B cell (primary cell): ENCODE measurements at regions of chr3 and their contacts with region 1.

Region 1: GRCh38 chr3:31981206-31982181 is at the starts of genes OSBPL10 and ZNF860:
- DNase-seq: peak; percentile 75
- ATAC-seq: peak; percentile 64
- H3K4me3 ChIP-seq: peak within 1 kb of the TSS; percentile 75 to 95 (median 88)
- H3K4me3 Mint-ChIP-seq: peak within 1 kb of the TSS; percentile 99
- H3K27ac ChIP-seq: peak within 1 kb of the TSS; percentile 70 to 84
- H3K27ac Mint-ChIP-seq: peak within 1 kb of the TSS; percentile 98
- H3K4me1 ChIP-seq: peaks cover 75% of the 10 kb centered on the region in 2 donors
- H3K4me1 Mint-ChIP-seq: peaks cover 78% of the 10 kb centered on the region
- H3K27me3 ChIP-seq: no peaks in the 10 kb centered on the region
- H3K27me3 Mint-ChIP-seq: no peaks in the 10 kb centered on the region
- CTCF ChIP-seq: no peak
- total RNA-seq, gene OSBPL10: 310 and 317 TPM in 2 replicates
- total RNA-seq, gene ZNF860: 41.4 and 45.9 TPM in 2 replicates

Region 2: GRCh38 chr3:31802981-31803740 is 178.3 kb before region 1 on chr3:
- CTCF ChIA-PET with region 1: interaction called, 3 read pairs
- POLR2A ChIA-PET with region 1: interaction called, 4 read pairs
- intact Hi-C with region 1: loop called (anchors 5 kb)
- DNase-seq: peak; percentile 26
- ATAC-seq: peak; percentile 87
- H3K4me3 ChIP-seq: no peak overlapping the region
- H3K4me3 Mint-ChIP-seq: peak overlapping the region; percentile 19
- H3K27ac ChIP-seq: peak overlapping the region in 1 of 2 donors; percentile 56
- H3K27ac Mint-ChIP-seq: peak overlapping the region; percentile 78
- H3K4me1 ChIP-seq: peaks cover 12 to 13% of the 10 kb centered on the region in 2 donors
- H3K4me1 Mint-ChIP-seq: peaks cover 52% of the 10 kb centered on the region
- H3K27me3 ChIP-seq: no peaks in the 10 kb centered on the region
- H3K27me3 Mint-ChIP-seq: no peaks in the 10 kb centered on the region
- CTCF ChIP-seq: no peak

Region 3: GRCh38 chr3:31934018-31934417 is 47.5 kb before region 1 on chr3:
- CTCF ChIA-PET with region 1: no interaction called
- POLR2A ChIA-PET with region 1: interaction called, 4 read pairs
- intact Hi-C with region 1: loop called (anchors 2 kb)
- DNase-seq: no peak
- ATAC-seq: peak; percentile 28
- H3K4me3 ChIP-seq: no peak overlapping the region
- H3K4me3 Mint-ChIP-seq: peak overlapping the region; percentile 40
- H3K27ac ChIP-seq: peak overlapping the region in 1 of 2 donors; percentile 67
- H3K27ac Mint-ChIP-seq: peak overlapping the region; percentile 77
- H3K4me1 ChIP-seq: peaks cover 60 to 75% of the 10 kb centered on the region in 2 donors
- H3K4me1 Mint-ChIP-seq: peaks cover 47% of the 10 kb centered on the region
- H3K27me3 ChIP-seq: no peaks in the 10 kb centered on the region
- H3K27me3 Mint-ChIP-seq: no peaks in the 10 kb centered on the region
- CTCF ChIP-seq: no peak

Region 4: GRCh38 chr3:31968927-31969418 is 12.5 kb before region 1 on chr3:
- CTCF ChIA-PET with region 1: interaction called, 6 read pairs
- POLR2A ChIA-PET with region 1: interaction called, 4 read pairs
- intact Hi-C with region 1: loop called (anchors 1 kb)
- DNase-seq: no peak
- ATAC-seq: no peak
- H3K4me3 ChIP-seq: no peak overlapping the region
- H3K4me3 Mint-ChIP-seq: peak overlapping the region; percentile 6
- H3K27ac ChIP-seq: peak overlapping the region in 1 of 2 donors; percentile 68
- H3K27ac Mint-ChIP-seq: peak overlapping the region; percentile 76
- H3K4me1 ChIP-seq: peaks cover 64 to 66% of the 10 kb centered on the region in 2 donors
- H3K4me1 Mint-ChIP-seq: peaks cover 77% of the 10 kb centered on the region
- H3K27me3 ChIP-seq: no peaks in the 10 kb centered on the region
- H3K27me3 Mint-ChIP-seq: no peaks in the 10 kb centered on the region
- CTCF ChIP-seq: no peak

Region 5: DNA sequence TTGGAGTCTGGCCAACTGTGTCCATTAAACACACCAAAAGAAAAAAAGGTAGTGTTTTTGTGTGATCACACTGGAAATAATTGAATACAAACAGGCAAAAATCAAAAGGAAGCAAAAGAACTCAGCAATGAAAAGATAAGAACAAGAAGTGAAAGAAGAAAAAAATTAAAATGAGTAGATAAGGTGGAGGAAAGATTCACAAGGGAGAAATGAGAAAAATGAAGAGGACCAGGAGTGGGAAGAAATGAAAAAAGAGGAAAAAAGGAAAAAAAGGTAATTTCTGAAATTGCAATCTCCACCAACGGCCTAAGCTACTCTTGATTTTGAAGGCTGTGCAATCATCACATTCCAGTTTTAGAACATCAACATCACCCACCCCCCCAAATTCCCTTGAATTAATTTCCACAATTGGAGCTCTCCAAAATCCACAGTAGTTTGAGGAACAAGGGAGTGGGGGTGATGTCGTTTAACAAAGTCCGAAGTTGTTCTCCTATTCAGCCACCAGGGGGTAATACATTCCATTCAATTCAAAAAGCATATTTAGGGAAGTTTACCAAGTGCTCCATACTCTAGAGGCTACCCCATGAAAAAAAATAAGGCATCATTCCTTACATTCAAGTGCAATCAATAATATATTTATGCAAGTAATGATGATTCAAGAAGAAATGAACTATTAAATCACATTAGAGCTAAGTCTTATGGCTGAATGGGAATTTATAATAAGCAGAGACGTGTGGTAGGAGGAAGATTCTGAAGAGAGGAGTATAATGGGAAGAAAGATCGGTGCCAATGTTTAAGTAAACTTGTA is 37.5 kb after region 1 on chr3:
- CTCF ChIA-PET with region 1: interaction called, 22 read pairs
- POLR2A ChIA-PET with region 1: no interaction called
- intact Hi-C with region 1: no loop called
- DNase-seq: peak; percentile 53
- ATAC-seq: peak; percentile 53
- H3K4me3 ChIP-seq: no peak overlapping the region
- H3K4me3 Mint-ChIP-seq: no peak overlapping the region
- H3K27ac ChIP-seq: no peak overlapping the region
- H3K27ac Mint-ChIP-seq: no peak overlapping the region
- H3K4me1 ChIP-seq: peaks cover 7 to 10% of the 10 kb centered on the region in 2 donors
- H3K4me1 Mint-ChIP-seq: peaks cover 13% of the 10 kb centered on the region
- H3K27me3 ChIP-seq: no peaks in the 10 kb centered on the region
- H3K27me3 Mint-ChIP-seq: no peaks in the 10 kb centered on the region
- CTCF ChIP-seq: peak; percentile 81